Activated T-helper 1 cell treated with anti-CD3 and anti-CD28 coated beads, Interleukin-12 subunit alpha, Interleukin-12 subunit beta, Interleukin-2, Interleukin-4 antibody, amounts not matched to agents 30 ng/mL and 10 ng/mL and 1 ng/mL, durations not matched to agents 14 hours and 24 hours and 36 hours (primary cell): ENCODE measurements at regions of chr12 and their contacts with region 1.

Region 1: GRCh38 chr12:9364224-9365176 is 156.3 kb upstream of the PZP start:
- DNase-seq: peak; percentile 47
- H3K4me3 Mint-ChIP-seq: peak overlapping the region; percentile 52
- H3K27ac Mint-ChIP-seq: peak overlapping the region; percentile 69
- H3K4me1 Mint-ChIP-seq: peaks cover 55% of the 10 kb centered on the region
- H3K27me3 Mint-ChIP-seq: peaks cover 27% of the 10 kb centered on the region

Region 2: GRCh38 chr12:8996682-8997360 is 367.7 kb before region 1 on chr12:
- intact Hi-C with region 1: loop called (anchors 1 kb)
- DNase-seq: peak; percentile 6
- H3K4me3 Mint-ChIP-seq: no peak overlapping the region
- H3K27ac Mint-ChIP-seq: no peak overlapping the region
- H3K4me1 Mint-ChIP-seq: peaks cover 24% of the 10 kb centered on the region
- H3K27me3 Mint-ChIP-seq: peaks cover 14% of the 10 kb centered on the region

Region 3: DNA sequence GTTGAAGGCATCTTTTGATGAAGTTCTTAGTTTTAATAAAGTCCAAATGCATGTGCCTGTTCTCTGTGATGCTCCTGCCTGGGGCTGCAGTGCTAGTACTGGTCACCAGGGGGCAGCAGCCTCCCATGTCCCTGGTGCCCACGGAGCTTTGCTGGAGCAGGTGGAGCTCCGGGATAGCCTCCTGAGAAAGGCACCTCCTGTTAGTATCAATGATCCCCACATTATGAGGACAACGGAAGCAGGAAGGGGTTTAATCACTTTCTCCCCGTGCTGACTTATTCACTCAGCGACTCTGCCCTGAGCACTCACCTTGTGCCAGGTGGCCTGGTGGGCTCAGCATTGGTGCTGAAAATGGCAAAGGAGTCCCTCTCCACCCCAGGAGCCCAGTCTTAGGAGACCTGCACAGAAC is 33.3 kb before region 1 on chr12:
- intact Hi-C with region 1: loop called (anchors 5 kb)
- DNase-seq: peak; percentile 47
- H3K4me3 Mint-ChIP-seq: no peak overlapping the region
- H3K27ac Mint-ChIP-seq: no peak overlapping the region
- H3K4me1 Mint-ChIP-seq: peaks cover 20% of the 10 kb centered on the region
- H3K27me3 Mint-ChIP-seq: peaks cover under 1% of the 10 kb centered on the region

Region 4: DNA sequence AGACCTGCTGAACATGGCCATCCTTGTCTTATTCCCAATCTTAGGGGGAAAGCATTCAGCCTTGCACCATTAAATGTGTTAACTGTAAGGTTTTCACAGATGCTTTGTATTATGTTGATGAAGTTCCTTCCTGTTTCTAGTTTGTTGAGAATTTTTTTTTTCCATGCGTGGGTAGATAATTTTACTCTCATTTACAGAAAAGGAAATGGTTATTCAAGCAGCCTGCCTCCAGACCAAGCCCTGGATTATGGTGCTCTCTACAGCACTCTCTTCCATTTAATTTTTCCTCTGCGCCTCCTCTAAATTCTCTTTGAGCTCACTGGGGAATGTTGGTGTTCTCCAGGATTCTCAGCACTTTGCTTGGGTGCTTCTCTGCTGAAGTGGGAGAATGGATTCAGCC is 22.9 kb after region 1 on chr12:
- intact Hi-C with region 1: loop called (anchors 1 kb)
- DNase-seq: no peak
- H3K4me3 Mint-ChIP-seq: no peak overlapping the region
- H3K27ac Mint-ChIP-seq: no peak overlapping the region
- H3K4me1 Mint-ChIP-seq: peaks cover 12% of the 10 kb centered on the region
- H3K27me3 Mint-ChIP-seq: peaks cover 2% of the 10 kb centered on the region

Region 5: GRCh38 chr12:9673404-9674225 is 309.1 kb after region 1 on chr12:
- intact Hi-C with region 1: loop called (anchors 2 kb)
- DNase-seq: no peak
- H3K4me3 Mint-ChIP-seq: peak overlapping the region; percentile 90
- H3K27ac Mint-ChIP-seq: peak overlapping the region; percentile 97
- H3K4me1 Mint-ChIP-seq: peaks cover 73% of the 10 kb centered on the region
- H3K27me3 Mint-ChIP-seq: no peaks in the 10 kb centered on the region

Region 6: DNA sequence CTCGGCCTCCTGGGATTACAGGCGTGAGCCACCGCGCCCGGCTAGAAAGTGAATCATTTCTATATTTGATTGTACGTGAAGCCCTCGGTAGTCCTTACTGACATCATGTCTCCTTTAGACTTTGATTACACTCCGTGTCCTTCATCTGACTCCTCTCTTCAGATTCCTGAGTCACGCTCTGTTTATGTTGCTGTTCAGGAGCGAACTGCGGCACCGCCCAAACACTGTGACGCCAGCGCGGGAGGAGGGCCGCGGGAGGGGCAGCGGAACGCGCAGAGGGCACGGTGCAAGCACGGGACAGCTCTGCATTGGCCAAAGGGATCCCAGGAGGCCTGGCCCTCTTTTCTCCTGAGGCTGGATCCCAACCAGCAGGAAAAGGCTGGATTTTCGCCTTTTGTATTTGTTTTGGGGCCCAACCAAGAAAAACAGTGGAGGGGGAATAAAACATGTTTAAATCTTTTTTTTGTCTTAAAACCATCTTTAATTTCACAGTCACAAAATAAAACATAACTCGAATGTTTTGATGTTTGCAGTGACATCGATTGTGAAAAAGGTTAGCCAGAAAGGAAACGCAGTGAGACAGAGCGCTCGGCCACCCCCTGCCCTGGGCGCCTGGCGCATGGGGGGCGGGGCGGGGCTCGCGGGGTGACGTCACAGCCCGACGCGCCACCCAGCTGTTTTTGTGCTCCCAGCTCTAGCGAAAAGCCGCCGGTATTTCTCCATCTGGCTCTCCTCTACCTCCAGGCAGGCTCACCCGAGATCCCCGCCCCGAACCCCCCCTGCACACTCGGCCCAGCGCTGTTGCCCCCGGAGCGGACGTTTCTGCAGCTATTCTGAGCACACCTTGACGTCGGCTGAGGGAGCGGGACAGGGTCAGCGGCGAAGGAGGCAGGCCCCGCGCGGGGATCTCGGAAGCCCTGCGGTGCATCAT is 848.0 kb after region 1 on chr12 and contains the start of gene GABARAPL1:
- intact Hi-C with region 1: loop called (anchors 2 kb)
- DNase-seq: peak; percentile 76
- H3K4me3 Mint-ChIP-seq: peak within 1 kb of the TSS; percentile 84
- H3K27ac Mint-ChIP-seq: peak within 1 kb of the TSS; percentile 93
- H3K4me1 Mint-ChIP-seq: peaks cover 32% of the 10 kb centered on the region
- H3K27me3 Mint-ChIP-seq: peaks cover 23% of the 10 kb centered on the region
- total RNA-seq, gene GABARAPL1: 5.0 and 6.6 TPM in 2 replicates

Region 7: GRCh38 chr12:10227648-10228047 is 863.1 kb after region 1 on chr12:
- intact Hi-C with region 1: no loop called
- DNase-seq: no peak
- H3K4me3 Mint-ChIP-seq: no peak overlapping the region
- H3K27ac Mint-ChIP-seq: no peak overlapping the region
- H3K4me1 Mint-ChIP-seq: peaks cover 10% of the 10 kb centered on the region
- H3K27me3 Mint-ChIP-seq: no peaks in the 10 kb centered on the region

Region 8: GRCh38 chr12:10807186-10807585 is 1442.7 kb after region 1 on chr12 and contains the start of gene TAS2R8:
- intact Hi-C with region 1: no loop called
- DNase-seq: no peak
- H3K4me3 Mint-ChIP-seq: no peak within 1 kb of the TSS
- H3K27ac Mint-ChIP-seq: no peak within 1 kb of the TSS
- H3K4me1 Mint-ChIP-seq: no peaks in the 10 kb centered on the region
- H3K27me3 Mint-ChIP-seq: peaks cover 13% of the 10 kb centered on the region
- total RNA-seq, gene TAS2R8: not detected in 2 replicates